Activated CD4-positive, alpha-beta T cell treated with anti-CD3 and anti-CD28 coated beads for 36 hours (primary cell): ENCODE measurements at regions of chr6 and their contacts with region 1.

Region 1: GRCh38 chr6:88165844-88166492 is at the start of gene CNR1:
- DNase-seq: peak; percentile 36
- ATAC-seq: peak; percentile 68
- H3K4me3 Mint-ChIP-seq: peak within 1 kb of the TSS; percentile 56
- H3K27ac Mint-ChIP-seq: no peak within 1 kb of the TSS
- H3K4me1 Mint-ChIP-seq: peaks cover 11% of the 10 kb centered on the region
- H3K27me3 Mint-ChIP-seq: peaks cover 56% of the 10 kb centered on the region
- total RNA-seq, gene CNR1: not detected

Region 2: DNA sequence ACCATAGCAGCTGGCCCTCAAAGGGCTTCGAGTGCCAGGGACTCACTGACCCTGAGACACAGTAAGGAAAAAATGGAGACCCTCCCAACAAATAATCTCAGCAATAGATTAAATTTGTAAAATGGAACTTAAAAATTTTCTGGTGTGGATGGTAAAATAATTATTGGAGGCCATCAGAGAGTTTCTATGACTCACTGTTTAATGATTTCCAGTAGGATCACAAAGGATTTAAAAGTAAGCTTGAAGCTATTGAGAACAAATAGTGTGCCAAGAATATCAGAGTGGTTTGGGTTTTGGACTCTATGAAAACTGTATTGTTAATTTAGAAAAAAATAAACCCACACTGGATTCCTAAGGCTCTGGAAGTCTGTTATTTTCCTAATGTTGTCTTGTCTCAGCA is 348.8 kb before region 1 on chr6:
- CTCF ChIA-PET with region 1: no interaction called
- POLR2A ChIA-PET with region 1: no interaction called
- intact Hi-C with region 1: no loop called
- DNase-seq: no peak
- ATAC-seq: no peak
- H3K4me3 Mint-ChIP-seq: no peak overlapping the region
- H3K27ac Mint-ChIP-seq: no peak overlapping the region
- H3K4me1 Mint-ChIP-seq: no peaks in the 10 kb centered on the region
- H3K27me3 Mint-ChIP-seq: peaks cover 14% of the 10 kb centered on the region

Region 3: DNA sequence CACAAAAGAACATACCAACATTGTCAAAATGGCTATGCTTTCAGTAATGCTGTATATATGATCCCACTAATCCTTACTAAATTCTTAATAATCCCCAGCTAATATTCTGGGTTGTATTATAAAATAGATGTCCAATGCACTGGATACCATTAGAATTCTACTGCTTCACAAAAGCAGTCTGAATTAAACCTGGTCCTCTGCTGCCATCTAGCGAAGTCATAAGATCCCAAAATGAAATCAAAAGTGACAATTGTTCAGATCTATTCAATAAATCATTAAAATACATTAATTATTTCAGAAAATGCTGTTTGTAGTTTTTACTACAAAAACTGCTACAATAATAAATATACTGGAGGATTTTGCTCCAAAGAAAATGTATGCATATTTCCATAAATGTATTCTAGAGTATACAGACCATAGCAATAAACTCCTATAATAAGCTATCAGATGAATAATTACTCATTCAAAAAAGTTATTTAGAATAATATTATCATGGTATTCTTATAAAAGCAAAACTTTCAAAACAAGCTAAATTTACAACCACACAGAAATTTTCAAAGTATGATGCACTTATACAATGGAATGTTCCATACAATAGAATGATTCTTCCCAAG is 704.9 kb after region 1 on chr6:
- CTCF ChIA-PET with region 1: no interaction called
- POLR2A ChIA-PET with region 1: no interaction called
- intact Hi-C with region 1: loop called in 1 of 2 experiments (anchors 5 kb)
- DNase-seq: peak; percentile 44
- ATAC-seq: no peak
- H3K4me3 Mint-ChIP-seq: no peak overlapping the region
- H3K27ac Mint-ChIP-seq: no peak overlapping the region
- H3K4me1 Mint-ChIP-seq: peaks cover 28% of the 10 kb centered on the region
- H3K27me3 Mint-ChIP-seq: no peaks in the 10 kb centered on the region